K562 (cell line): ENCODE measurements at regions of chr12 and their contacts with region 1.

Region 1: DNA sequence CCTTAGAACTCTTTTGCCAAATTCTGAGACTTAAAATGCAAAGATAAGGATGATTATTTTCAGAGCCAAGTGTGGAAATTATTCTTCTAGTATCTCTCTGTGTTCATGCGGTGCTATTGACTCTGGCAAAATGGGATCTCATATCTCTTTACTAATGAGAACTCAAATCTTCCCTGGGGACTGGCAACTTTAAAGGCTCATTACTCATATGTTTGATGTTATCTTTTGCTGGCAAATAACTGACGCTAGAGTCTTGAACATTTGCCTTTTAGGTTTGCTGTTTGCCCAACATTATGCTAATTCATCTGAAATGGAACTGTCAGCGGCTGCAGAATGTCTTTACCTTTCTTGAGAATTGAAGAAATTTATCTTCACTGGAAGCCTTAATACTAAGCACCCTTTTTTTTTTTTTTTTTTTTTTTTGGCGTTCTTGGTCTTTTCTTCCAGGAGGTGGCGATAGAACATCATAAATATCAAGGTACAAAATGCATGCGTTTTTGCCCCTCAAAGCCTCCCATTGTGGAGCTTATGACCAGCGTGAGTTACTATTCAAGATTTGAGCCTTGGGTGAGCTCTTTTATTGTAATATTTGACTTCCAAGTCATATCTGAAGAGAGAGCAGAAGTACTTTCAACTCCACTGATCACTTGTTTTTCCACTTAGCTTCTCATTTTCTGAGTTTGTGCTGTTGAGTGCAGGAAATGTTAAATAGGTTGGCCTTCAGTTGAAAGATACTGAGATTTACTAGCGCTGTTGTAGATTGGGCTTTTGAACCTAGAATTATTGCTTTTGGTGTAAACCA is 86.6 kb downstream of the CAND1 start:
- DNase-seq: peak; percentile 15 to 52 (median 23)
- ATAC-seq: peak; percentile 66
- H3K4me3 ChIP-seq: no peak overlapping the region
- H3K27ac ChIP-seq: no peak overlapping the region
- H3K4me1 ChIP-seq: no peaks in the 10 kb centered on the region
- H3K27me3 ChIP-seq: peaks cover 0 to 2% of the 10 kb centered on the region in 2 experiments; a peak in 2 of 5 replicates
- CTCF ChIP-seq: peak; percentile 35 to 69 (median 54); a peak in 4 of 6 replicates
- EP300 ChIP-seq: no peak
- POLR2A ChIP-seq: no peak
- RAD21 ChIP-seq: peak; percentile 52 to 60

Region 2: GRCh38 chr12:67415473-67415872 is 59.7 kb after region 1 on chr12:
- CTCF ChIA-PET with region 1: no interaction called
- POLR2A ChIA-PET with region 1: no interaction called
- in situ Hi-C with region 1: no loop called
- intact Hi-C with region 1: loop called (anchors 5 kb)
- DNase-seq: peak in 2 of 4 experiments; percentile 21 to 25
- ATAC-seq: peak; percentile 71
- H3K4me3 ChIP-seq: no peak overlapping the region
- H3K27ac ChIP-seq: no peak overlapping the region
- H3K4me1 ChIP-seq: no peaks in the 10 kb centered on the region
- H3K27me3 ChIP-seq: 0 out of 5 replicates have a peak, but pooled peaks cover 0 to 2% of the 10 kb centered on the region in 2 experiments
- CTCF ChIP-seq: peak; percentile 41 to 68 (median 56); a peak in 5 of 6 replicates
- EP300 ChIP-seq: no peak
- POLR2A ChIP-seq: no peak
- RAD21 ChIP-seq: peak; percentile 20 to 59; a peak in 2 of 4 replicates

Region 3: GRCh38 chr12:67441736-67442346 is 86.1 kb after region 1 on chr12:
- CTCF ChIA-PET with region 1: interaction called, 3 read pairs
- POLR2A ChIA-PET with region 1: no interaction called
- in situ Hi-C with region 1: no loop called
- intact Hi-C with region 1: loop called (anchors 2 kb)
- DNase-seq: peak; percentile 54 to 82 (median 62)
- ATAC-seq: peak; percentile 100
- H3K4me3 ChIP-seq: no peak overlapping the region
- H3K27ac ChIP-seq: no peak overlapping the region
- H3K4me1 ChIP-seq: no peaks in the 10 kb centered on the region; a peak in 2 of 5 replicates
- H3K27me3 ChIP-seq: no peaks in the 10 kb centered on the region
- CTCF ChIP-seq: peak; percentile 73 to 86 (median 83)
- EP300 ChIP-seq: no peak
- POLR2A ChIP-seq: no peak
- RAD21 ChIP-seq: peak; percentile 50 to 62

Region 4: GRCh38 chr12:67943226-67943892 is 587.6 kb after region 1 on chr12:
- CTCF ChIA-PET with region 1: interaction called, 24 read pairs
- POLR2A ChIA-PET with region 1: no interaction called
- in situ Hi-C with region 1: loop called (anchors 5 kb)
- intact Hi-C with region 1: loop called (anchors 2 kb)
- DNase-seq: peak; percentile 11 to 62 (median 23)
- ATAC-seq: peak; percentile 82
- H3K4me3 ChIP-seq: no peak overlapping the region
- H3K27ac ChIP-seq: no peak overlapping the region
- H3K4me1 ChIP-seq: no peaks in the 10 kb centered on the region
- H3K27me3 ChIP-seq: no peaks in the 10 kb centered on the region; a peak in 2 of 5 replicates
- CTCF ChIP-seq: peak; percentile 30 to 75 (median 63); a peak in 4 of 6 replicates
- EP300 ChIP-seq: no peak
- POLR2A ChIP-seq: no peak
- RAD21 ChIP-seq: peak; percentile 70 to 80